ENCODE measurements at regions of chr2 and their contacts with region 1.

Region 1: DNA sequence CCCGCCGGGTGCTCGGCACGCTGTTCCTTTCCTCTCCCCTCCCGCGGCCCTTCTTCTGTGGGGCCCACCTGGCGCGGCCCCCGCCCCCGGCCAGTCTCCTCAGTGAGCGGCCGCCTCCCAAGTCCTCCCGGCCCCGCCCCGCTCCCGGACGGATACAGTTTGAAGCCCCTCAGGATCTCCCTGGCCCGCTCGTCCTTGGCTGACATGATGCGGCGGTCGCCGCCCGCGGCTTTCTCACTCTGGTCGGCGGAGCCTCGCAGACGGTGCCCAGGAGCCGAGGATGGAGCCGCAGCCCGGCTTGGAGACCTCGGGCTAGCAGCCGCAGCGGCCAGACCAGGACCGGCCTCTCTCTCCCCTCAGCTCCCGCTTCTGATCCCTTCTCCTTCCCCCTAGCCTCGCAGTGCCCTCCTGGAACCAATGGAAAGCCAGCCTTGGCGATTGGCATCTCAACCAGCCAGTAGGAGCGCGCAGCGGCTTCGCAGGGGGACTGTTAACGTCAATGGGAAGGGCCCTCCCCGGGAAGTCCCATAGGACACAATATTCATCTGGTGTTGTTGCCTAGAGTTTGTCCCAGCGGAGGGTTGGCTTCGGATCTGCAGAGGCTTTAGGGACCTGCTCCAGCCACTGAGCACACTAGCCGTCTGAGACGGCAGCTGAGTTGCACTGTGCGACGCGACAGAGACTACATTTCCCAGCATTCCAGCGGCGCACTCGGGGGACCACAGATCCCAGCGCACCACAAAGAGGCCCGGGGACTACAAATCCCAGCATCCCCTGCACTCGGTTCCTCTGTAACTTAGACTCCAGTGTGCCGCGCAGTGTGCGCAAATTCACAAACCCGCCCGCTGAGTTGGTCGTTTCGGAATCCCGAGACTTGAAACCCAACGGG is at the start of gene PDE6D:
- DNase-seq: peak; percentile 90 to 99 (median 95)
- ATAC-seq: peak; percentile 89
- H3K4me3 ChIP-seq: peak within 1 kb of the TSS; percentile 78 to 97
- H3K4me3 Mint-ChIP-seq: peak within 1 kb of the TSS; percentile 99
- H3K27ac ChIP-seq: peak within 1 kb of the TSS; percentile 53 to 89
- H3K27ac Mint-ChIP-seq: peak within 1 kb of the TSS; percentile 96
- H3K4me1 ChIP-seq: peaks cover 44% of the 10 kb centered on the region
- H3K4me1 Mint-ChIP-seq: peaks cover 71% of the 10 kb centered on the region
- H3K27me3 ChIP-seq: no peaks in the 10 kb centered on the region
- H3K27me3 Mint-ChIP-seq: no peaks in the 10 kb centered on the region
- CTCF ChIP-seq: no peak
- total RNA-seq, gene PDE6D: 4.7 to 5.6 TPM

Region 2: DNA sequence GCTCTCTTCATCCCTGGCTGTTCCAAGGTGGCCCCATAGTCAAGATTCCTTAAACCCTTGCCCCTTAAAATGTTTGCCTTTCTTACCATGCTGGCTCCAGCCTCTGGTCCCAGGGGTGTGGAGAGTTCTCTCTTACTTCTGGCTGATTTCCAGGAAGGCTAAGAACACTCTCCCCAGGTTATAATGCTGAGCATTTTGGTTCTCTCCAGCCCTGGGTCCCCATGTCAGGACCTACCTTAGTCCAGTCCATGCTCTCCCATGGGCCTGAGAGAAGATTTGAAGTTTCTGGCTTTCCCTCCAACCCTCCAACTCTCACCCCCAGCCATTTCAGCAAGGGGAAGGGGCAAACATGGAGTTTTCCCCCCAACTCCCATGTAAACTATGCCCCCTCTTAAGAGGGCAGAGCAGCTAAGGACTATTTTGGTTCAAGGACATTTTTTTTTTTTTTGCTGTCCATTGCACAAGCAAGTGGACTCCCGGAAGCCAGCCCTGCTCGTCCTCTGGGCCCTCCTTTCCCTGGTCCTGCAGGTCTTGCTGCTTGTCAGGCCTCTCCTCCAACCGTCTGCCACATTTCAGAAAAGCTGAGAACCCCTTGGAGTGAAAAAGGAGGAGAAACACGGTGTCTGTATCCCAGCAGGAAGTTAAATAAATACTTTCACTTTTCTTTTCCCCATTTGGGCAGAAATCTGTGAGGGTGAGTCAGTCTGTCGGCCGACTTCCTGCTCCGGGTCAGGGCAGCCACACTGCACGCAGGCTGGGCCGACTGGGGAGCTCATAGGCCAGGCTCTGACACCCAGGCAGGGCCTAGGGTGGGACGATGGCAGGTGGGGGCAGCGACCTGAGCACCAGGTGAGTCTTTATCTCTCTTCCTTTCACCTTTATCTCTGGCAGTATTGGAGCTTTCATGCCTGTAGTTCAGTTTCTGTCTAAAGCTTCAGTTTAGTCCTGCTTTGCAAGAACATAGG is 1454.4 kb before region 1 on chr2 and contains the start of gene SP140L:
- CTCF ChIA-PET with region 1: no interaction called
- POLR2A ChIA-PET with region 1: no interaction called
- intact Hi-C with region 1: loop called in 1 of 2 experiments (anchors 5 kb)
- DNase-seq: peak; percentile 56 to 91 (median 82)
- ATAC-seq: peak; percentile 100
- H3K4me3 ChIP-seq: peak within 1 kb of the TSS; percentile 63 to 80
- H3K4me3 Mint-ChIP-seq: peak within 1 kb of the TSS; percentile 96
- H3K27ac ChIP-seq: peak within 1 kb of the TSS; percentile 88 to 90
- H3K27ac Mint-ChIP-seq: peak within 1 kb of the TSS; percentile 99
- H3K4me1 ChIP-seq: peaks cover 44% of the 10 kb centered on the region
- H3K4me1 Mint-ChIP-seq: peaks cover 80% of the 10 kb centered on the region
- H3K27me3 ChIP-seq: no peaks in the 10 kb centered on the region
- H3K27me3 Mint-ChIP-seq: no peaks in the 10 kb centered on the region
- CTCF ChIP-seq: no peak
- total RNA-seq, gene SP140L: 69.8 to 70.5 TPM

Region 3: DNA sequence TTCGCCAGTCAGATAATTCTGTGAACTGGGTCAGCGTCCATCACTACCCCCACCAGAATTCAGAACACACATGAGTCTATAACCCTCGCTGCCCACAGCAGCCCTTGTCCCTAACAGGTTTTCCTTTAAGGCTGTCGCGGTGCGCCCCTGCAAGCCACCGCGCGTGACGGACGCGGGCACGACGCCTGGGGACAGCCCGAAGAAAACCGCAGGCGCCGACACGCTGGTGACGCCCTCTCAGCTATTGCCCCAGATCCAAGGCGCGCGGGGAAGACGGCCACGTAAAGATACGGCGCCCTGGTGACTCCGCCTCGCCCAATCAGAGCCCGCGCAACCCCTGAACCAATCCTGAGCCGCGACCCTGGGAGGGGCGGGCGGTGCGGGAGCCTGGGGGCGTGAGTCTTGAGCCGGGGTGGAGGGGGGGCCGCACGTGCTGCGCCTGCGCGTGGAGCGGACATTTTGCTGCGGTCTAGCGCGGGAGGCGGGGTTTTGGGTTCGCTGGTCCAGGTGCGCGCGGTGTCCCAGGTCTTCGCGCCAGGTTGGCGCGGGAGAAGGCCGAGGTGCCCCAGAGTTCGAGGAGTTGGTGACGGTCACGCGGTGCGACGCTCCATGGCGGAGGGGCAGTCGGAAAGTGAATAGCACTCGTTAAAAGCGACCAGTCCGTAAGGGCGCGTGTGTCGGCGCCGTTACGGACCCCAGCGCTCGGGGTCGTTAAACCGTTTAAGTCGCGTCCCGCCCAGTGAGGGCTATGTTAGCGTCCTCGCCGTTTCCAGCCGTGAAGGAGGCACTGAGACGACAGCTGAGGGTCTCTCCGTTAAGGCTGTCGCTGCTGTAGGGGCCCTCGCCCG is 266.8 kb before region 1 on chr2:
- CTCF ChIA-PET with region 1: no interaction called
- POLR2A ChIA-PET with region 1: no interaction called
- intact Hi-C with region 1: loop called (anchors 1 to 2 kb)
- DNase-seq: peak; percentile 96 to 99 (median 98)
- ATAC-seq: peak; percentile 97
- H3K4me3 ChIP-seq: peak overlapping the region; percentile 86 to 88
- H3K4me3 Mint-ChIP-seq: peak overlapping the region; percentile 90
- H3K27ac ChIP-seq: peak overlapping the region; percentile 85 to 94
- H3K27ac Mint-ChIP-seq: peak overlapping the region; percentile 97
- H3K4me1 ChIP-seq: peaks cover 13% of the 10 kb centered on the region
- H3K4me1 Mint-ChIP-seq: peaks cover 18% of the 10 kb centered on the region
- H3K27me3 ChIP-seq: no peaks in the 10 kb centered on the region
- H3K27me3 Mint-ChIP-seq: no peaks in the 10 kb centered on the region
- CTCF ChIP-seq: no peak

Region 4: GRCh38 chr2:231674587-231675338 is 106.4 kb before region 1 on chr2:
- CTCF ChIA-PET with region 1: interaction called, 4 read pairs
- POLR2A ChIA-PET with region 1: no interaction called
- intact Hi-C with region 1: loop called in 1 of 2 experiments (anchors 5 kb)
- DNase-seq: peak in 8 of 9 experiments; percentile 37 to 71 (median 58)
- ATAC-seq: peak; percentile 53
- H3K4me3 ChIP-seq: no peak overlapping the region
- H3K4me3 Mint-ChIP-seq: no peak overlapping the region
- H3K27ac ChIP-seq: no peak overlapping the region
- H3K27ac Mint-ChIP-seq: no peak overlapping the region
- H3K4me1 ChIP-seq: peaks cover 5% of the 10 kb centered on the region
- H3K4me1 Mint-ChIP-seq: peaks cover 6% of the 10 kb centered on the region
- H3K27me3 ChIP-seq: no peaks in the 10 kb centered on the region
- H3K27me3 Mint-ChIP-seq: peaks cover under 1% of the 10 kb centered on the region
- CTCF ChIP-seq: peak; percentile 52

Region 5: DNA sequence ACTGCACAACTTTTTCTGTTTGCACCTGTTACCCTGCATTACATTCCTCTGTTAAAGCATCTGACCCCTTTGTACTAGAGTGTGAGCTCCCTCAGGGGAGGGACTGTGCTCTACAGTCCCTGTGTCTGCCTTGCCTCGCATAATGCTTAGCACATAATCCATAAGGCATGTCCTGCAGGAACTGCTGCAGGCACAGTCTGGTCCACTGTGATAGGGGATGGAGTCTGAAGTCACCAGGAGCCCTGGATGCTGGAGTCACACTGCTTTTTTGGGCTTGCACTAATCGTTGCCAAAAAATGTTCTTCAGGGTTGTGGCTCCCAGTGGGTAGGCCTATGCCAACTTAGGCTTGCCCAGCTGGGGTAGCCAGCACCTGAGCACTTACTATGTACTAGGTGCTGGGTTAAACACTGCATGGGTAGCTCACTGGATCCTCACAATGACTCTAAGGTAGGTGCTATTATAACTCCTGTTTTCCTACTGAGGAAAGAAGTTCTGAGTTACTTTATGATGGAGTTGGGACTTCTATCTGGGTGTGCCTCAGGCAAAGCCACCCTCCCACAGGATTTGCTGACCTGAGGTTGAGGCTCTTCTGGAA is 38.4 kb after region 1 on chr2:
- CTCF ChIA-PET with region 1: no interaction called
- POLR2A ChIA-PET with region 1: no interaction called
- intact Hi-C with region 1: no loop called
- DNase-seq: no peak
- ATAC-seq: no peak
- H3K4me3 ChIP-seq: no peak overlapping the region
- H3K4me3 Mint-ChIP-seq: no peak overlapping the region
- H3K27ac ChIP-seq: no peak overlapping the region
- H3K27ac Mint-ChIP-seq: no peak overlapping the region
- H3K4me1 ChIP-seq: no peaks in the 10 kb centered on the region
- H3K4me1 Mint-ChIP-seq: no peaks in the 10 kb centered on the region
- H3K27me3 ChIP-seq: no peaks in the 10 kb centered on the region
- H3K27me3 Mint-ChIP-seq: peaks cover 7% of the 10 kb centered on the region
- CTCF ChIP-seq: no peak

Region 6: GRCh38 chr2:232550354-232551249 is 769.4 kb after region 1 on chr2 and contains the starts of genes EIF4E2 and TIGD1:
- CTCF ChIA-PET with region 1: no interaction called
- POLR2A ChIA-PET with region 1: no interaction called
- intact Hi-C with region 1: loop called (anchors 1 to 2 kb)
- DNase-seq: peak; percentile 78 to 94 (median 91)
- ATAC-seq: peak; percentile 82
- H3K4me3 ChIP-seq: peak within 1 kb of the TSS; percentile 74 to 91
- H3K4me3 Mint-ChIP-seq: peak within 1 kb of the TSS; percentile 100
- H3K27ac ChIP-seq: peak within 1 kb of the TSS; percentile 86 to 88
- H3K27ac Mint-ChIP-seq: peak within 1 kb of the TSS; percentile 100
- H3K4me1 ChIP-seq: peaks cover 28% of the 10 kb centered on the region
- H3K4me1 Mint-ChIP-seq: peaks cover 80% of the 10 kb centered on the region
- H3K27me3 ChIP-seq: no peaks in the 10 kb centered on the region
- H3K27me3 Mint-ChIP-seq: no peaks in the 10 kb centered on the region
- CTCF ChIP-seq: peak; percentile 55
- total RNA-seq, gene EIF4E2: 53.8 to 55.2 TPM
- total RNA-seq, gene TIGD1: 16.5 to 17.2 TPM

Measured in CD8-positive, alpha-beta T cell (primary cell).